ENCODE measurements at regions of chr18 and their contacts with region 1.

Region 1: DNA sequence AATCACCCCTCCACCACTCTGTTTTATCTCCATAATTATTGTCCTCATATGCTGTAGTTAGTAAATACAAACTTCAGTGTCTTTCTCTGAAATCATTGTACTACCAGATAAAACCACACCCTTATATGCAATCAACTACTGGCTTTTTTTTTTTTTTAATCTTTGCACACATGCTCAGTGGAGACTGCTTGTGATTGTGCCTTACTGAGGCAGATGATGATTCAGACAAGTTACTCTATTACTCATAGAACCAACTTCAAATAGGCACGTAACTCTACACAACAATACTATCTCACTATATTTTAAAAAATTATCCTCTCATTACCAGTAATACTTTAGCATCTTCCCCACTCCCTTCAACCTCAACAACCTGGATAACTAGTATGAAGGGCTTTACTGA is 1278.4 kb upstream of the PIK3C3 start:
- DNase-seq: no peak
- H3K4me3 Mint-ChIP-seq: no peak overlapping the region
- H3K27ac Mint-ChIP-seq: no peak overlapping the region
- H3K4me1 Mint-ChIP-seq: no peaks in the 10 kb centered on the region
- H3K27me3 Mint-ChIP-seq: no peaks in the 10 kb centered on the region

Region 2: DNA sequence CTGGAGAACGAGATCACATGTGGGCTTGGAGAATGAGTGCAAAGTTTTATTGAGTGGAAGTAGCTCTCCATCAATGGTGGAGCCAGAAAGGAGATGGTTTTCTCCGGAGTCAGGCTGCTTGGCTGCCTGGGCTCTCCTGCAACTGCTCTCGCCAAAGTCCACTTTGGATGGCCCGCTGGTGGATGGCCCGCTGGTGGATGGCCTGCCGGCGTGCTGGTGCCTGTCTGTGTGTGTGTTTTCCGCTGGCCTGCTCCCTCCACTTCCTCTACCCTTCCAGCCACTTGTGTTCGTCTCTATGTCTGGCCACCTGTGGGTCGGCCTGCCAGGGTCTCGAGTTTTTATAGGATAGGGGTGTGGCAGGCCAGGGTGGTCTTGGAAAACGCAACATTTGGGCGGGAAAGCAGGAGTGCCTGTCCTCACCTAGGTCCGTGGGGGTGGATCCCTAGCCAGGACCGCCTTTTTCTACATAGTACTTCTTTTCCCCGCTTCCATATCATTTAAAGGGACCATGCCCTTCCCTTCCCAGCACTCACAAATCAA is 13.7 kb before region 1 on chr18:
- CTCF ChIA-PET with region 1: no interaction called
- POLR2A ChIA-PET with region 1: no interaction called
- intact Hi-C with region 1: no loop called
- DNase-seq: no peak
- H3K4me3 Mint-ChIP-seq: no peak overlapping the region
- H3K27ac Mint-ChIP-seq: no peak overlapping the region
- H3K4me1 Mint-ChIP-seq: no peaks in the 10 kb centered on the region
- H3K27me3 Mint-ChIP-seq: no peaks in the 10 kb centered on the region

Region 3: DNA sequence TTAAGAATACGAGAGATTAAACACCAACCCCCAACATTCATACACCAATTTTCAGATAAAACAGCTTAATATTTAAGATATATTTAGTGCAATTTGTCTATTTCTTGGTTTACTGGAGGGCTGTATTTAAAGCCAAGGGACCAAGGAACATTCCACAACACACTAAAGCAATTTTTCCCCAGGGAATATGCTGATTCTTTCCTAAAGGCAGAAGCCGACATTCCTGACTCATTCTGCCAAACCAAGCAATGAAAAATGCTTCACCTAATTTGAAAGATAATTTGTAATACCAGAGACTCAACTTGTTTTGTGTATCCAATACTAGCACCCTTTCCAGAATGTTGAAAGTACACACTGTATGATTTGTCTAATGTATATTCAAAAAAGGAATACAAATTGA is 10.7 kb after region 1 on chr18:
- CTCF ChIA-PET with region 1: no interaction called
- POLR2A ChIA-PET with region 1: no interaction called
- intact Hi-C with region 1: loop called (anchors 1 kb)
- DNase-seq: no peak
- H3K4me3 Mint-ChIP-seq: no peak overlapping the region
- H3K27ac Mint-ChIP-seq: no peak overlapping the region
- H3K4me1 Mint-ChIP-seq: no peaks in the 10 kb centered on the region
- H3K27me3 Mint-ChIP-seq: no peaks in the 10 kb centered on the region